ENCODE measurements at regions of chr19 and their contacts with region 1.

Region 1: DNA sequence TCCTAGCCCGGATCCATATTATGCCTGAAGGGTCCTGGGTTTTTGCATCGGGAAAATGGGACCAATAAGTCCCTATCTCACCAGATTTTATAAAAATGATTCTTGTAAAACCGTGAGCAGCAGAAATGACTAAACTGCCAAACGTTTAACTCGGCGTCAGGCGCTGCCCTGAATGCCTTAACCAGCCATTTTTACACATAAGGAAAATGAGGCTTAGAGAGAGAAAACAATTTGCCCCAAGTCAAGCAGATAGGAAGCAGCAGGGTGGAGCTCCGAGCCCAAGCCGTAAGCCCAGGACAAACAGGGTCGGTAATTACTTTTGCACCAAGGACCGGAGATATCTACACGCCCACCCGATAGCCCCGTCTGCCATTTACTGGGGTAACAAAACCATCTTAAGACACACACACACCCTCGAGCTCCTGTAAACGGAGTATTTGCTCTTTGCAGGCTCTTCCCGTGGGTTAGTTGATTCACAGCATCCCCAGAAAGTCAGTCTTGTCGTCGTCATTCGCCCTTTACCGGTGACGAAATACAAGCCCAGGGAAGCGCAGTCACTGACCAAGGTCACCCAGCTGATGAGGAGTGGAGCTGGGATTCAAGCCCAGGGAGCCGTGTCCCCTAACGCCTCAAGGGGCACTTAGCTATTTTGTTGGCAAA is 16.0 kb upstream of the MRI1 start:
- DNase-seq: peak in 1 of 2 experiments; percentile 36
- H3K4me3 ChIP-seq: peak overlapping the region; percentile 94
- H3K27ac ChIP-seq: peak overlapping the region; percentile 61
- H3K4me1 ChIP-seq: peaks cover 11% of the 10 kb centered on the region
- H3K27me3 ChIP-seq: no peaks in the 10 kb centered on the region
- CTCF ChIP-seq: no peak

Region 2: DNA sequence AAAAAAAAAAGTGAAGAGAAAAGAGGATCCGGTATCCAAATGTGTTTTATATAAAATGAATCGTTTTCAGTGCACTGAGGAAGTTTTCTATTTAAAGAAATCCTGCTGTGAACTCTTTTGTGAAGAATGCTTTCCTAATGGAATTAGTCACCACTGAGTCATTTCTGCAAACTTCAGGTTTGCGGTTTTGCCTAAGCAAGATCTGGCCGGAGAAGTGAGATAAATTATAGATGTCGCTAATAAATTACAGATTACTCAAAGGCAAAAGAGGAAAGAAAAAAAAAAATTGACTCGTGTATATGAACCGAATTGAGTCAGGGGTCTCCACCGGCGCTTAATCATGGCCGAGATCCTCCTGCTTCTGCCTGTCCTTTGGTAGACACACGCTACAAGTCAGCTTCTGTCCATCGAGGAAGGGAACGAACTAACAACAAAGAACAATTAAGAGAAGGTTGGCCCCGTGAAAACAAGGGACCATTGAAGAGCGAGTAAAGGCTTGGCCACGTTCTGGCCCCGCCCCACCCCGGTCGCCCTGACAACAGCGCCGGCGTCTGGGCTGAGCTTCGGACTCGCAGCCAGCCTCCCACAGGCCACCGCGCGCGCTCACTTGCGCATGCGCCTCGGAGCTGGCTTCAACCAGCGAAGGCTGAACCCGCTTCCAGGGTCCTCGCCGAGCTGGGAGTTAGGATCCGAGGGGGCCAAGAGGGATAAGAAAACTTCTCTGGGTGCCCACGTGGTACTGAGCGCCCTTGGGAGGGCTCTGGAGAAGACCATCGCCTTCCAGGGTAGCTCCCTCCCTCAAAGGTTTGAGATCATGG is 16.9 kb before region 1 on chr19:
- CTCF ChIA-PET with region 1: interaction called, 27 read pairs
- POLR2A ChIA-PET with region 1: interaction called, 7 read pairs
- intact Hi-C with region 1: loop called (anchors 1 kb)
- DNase-seq: peak; percentile 94 to 97
- H3K4me3 ChIP-seq: peak overlapping the region; percentile 93
- H3K27ac ChIP-seq: peak overlapping the region; percentile 97
- H3K4me1 ChIP-seq: peaks cover 28% of the 10 kb centered on the region
- H3K27me3 ChIP-seq: no peaks in the 10 kb centered on the region
- CTCF ChIP-seq: no peak

Region 3: DNA sequence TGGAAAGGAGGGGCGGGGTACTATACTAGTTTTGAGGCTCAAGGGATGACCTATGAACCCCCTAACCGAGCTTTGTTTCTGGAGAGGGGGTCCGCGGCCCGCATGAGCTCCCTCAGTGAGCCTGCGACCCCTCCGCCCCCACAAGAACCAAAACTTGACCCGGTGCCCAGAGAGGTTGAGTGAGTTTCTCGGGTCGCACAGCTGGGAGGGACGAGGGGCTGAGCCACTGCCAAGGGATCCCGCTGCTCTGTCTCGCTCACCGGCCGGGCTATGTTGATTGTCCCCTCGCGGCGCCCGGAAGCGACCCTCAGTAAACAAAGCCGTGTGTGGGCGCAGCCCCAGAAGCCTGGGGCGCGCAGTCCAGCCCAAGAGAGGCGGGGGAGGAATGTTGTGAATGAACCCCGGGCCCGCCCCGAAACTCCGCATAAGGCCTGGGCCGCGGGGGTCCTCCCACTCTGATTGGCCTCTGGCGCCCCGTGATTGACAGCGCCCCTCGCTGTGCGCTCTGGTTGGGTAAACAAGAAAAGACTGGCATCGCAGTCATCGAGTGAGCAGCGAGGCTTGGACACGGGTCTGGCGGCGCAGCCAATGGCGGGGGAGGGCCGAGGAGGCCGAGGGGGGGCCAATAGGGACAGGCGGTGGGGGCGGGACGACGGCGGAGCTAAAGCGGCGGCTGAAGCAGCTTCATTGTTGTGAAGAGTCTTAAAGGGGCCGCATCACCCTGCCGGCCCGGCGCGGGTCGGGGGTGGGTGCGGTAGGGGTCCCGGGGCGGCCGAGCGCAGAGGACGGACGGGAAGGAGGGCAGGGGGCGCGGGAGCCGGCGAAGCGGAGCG is 46.7 kb after region 1 on chr19 and contains the start of gene ZSWIM4:
- CTCF ChIA-PET with region 1: no interaction called
- POLR2A ChIA-PET with region 1: no interaction called
- intact Hi-C with region 1: no loop called
- DNase-seq: peak; percentile 98 to 99
- H3K4me3 ChIP-seq: peak within 1 kb of the TSS; percentile 99
- H3K27ac ChIP-seq: peak within 1 kb of the TSS; percentile 94
- H3K4me1 ChIP-seq: peaks cover 33% of the 10 kb centered on the region
- H3K27me3 ChIP-seq: no peaks in the 10 kb centered on the region
- CTCF ChIP-seq: 0 out of 2 replicates have a peak, but pooled peaks have one; percentile 6
- total RNA-seq, gene ZSWIM4: 15.2 and 15.8 TPM in 2 replicates

Region 4: DNA sequence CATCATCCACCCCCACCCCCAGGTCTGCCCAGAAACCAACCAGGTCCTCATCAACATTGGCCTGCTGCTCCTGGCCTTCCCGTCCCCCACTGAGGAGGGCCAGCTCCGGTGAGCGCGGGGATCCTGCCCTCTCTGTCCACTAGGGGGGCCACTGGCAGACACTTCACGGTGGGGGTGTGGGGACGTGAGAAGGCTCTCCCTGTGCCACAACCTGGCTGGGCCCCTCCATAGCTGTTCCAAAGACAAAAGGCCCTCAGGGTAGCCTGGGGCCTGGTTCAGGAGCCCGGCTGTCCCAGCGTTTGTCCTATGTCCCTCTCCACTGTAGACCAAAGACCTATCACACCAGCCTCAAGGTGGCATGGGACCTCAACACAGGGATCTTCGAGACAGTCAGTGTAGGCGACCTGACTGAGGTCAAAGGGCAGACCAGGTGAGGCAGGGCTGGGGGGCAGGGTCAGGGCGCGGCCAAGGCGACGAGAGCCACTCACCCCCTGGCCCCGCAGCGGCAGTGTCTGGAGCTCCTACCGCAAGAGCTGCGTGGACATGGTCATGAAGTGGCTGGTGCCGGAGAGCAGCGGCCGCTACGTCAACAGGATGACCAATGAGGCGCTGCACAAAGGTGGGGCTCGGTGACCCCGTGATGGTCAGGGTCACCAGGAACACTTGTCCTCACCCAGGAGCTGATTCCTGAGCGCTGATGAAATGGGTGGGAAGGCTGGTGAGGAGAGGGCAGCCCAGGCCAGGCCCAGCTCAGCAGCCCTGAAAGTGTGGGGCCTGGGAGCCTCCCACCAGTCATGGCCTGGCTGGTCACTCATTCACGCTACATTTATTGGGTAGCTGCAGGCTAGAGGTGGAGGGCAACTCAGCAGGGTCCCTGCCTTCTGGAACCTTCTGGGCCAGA is 211.9 kb after region 1 on chr19:
- CTCF ChIA-PET with region 1: no interaction called
- POLR2A ChIA-PET with region 1: no interaction called
- intact Hi-C with region 1: no loop called
- DNase-seq: no peak
- H3K4me3 ChIP-seq: no peak overlapping the region
- H3K27ac ChIP-seq: no peak overlapping the region
- H3K4me1 ChIP-seq: no peaks in the 10 kb centered on the region
- H3K27me3 ChIP-seq: no peaks in the 10 kb centered on the region
- CTCF ChIP-seq: no peak; the same call in 1 of the 2 replicates

Region 5: GRCh38 chr19:13986348-13986904 is 238.1 kb after region 1 on chr19:
- CTCF ChIA-PET with region 1: no interaction called
- POLR2A ChIA-PET with region 1: no interaction called
- intact Hi-C with region 1: no loop called
- DNase-seq: peak in 1 of 2 experiments; percentile 30
- H3K4me3 ChIP-seq: no peak overlapping the region
- H3K27ac ChIP-seq: no peak overlapping the region
- H3K4me1 ChIP-seq: no peaks in the 10 kb centered on the region
- H3K27me3 ChIP-seq: no peaks in the 10 kb centered on the region
- CTCF ChIP-seq: no peak

Region 6: DNA sequence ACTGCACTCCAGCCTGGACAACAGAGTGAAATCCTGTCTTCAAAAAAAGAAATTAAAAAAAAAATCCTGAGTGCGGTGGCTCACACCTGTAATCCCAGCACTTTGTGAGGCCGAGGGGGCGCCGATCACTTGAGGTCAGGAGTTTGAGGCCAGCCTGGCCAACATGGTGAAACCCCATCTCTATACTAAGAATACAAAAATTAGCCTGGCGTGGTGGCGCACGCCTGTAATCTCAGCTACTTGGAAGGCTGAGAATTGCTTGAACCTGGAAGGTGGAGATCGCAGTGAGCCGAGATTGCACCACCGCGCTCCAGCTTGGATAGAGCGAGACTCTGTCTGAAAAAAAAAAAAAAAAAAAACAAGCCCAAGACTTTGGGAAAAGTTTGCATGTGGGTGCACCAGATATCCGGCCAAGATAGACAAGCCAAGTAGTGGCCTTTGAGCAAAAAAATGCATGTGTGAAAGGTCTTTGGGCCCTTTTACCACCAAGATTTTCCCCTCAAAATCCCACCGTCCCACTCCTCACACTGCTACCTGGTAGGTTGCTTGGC is 764.2 kb after region 1 on chr19:
- CTCF ChIA-PET with region 1: no interaction called
- POLR2A ChIA-PET with region 1: interaction called, 36 read pairs
- intact Hi-C with region 1: no loop called
- DNase-seq: no peak
- H3K4me3 ChIP-seq: no peak overlapping the region
- H3K27ac ChIP-seq: peak overlapping the region; percentile 99
- H3K4me1 ChIP-seq: peaks cover 64% of the 10 kb centered on the region
- H3K27me3 ChIP-seq: no peaks in the 10 kb centered on the region
- CTCF ChIP-seq: no peak

Measured in PC-9 (cell line).